Left colon (tissue), 2 donors: ENCODE measurements at regions of chr9 and their contacts with region 1.

Region 1: GRCh38 chr9:73081979-73082657 is 69.5 kb upstream of the ANXA1 start:
- DNase-seq: no peak
- ATAC-seq: peak; percentile 40

Region 2: DNA sequence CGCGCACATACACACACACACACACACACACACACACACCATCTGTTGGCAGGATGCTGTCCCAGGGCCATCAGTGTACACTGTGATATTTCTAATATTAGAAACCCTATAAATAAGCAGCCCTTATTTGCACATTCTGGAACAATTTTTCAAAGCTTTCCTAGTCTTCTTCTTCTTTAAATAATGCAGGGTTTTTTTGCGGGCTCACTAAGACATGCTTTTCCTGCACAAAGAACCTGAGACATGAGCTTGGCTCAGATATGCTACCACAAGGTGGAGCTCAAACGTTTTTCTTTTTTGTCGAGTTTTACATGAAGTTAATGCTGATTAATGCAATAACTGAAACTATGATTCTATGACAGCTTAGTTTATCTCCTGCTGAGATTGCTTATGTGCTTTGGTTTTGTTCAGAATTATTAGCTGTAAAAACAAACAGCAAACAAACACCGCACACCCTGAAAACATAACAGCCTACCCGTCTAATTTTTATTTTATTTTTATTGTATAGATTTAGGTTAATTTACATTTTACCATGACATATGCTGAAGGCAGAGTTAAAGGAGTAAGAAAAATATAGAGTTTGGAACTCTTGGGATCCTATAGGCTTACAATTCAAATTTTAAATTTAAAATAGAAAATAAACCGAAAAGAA is 225.0 kb before region 1 on chr9:
- intact Hi-C with region 1: loop called in 1 of 2 experiments (anchors 5 kb)
- DNase-seq: peak in 1 of 2 donors; percentile 8
- ATAC-seq: peak; percentile 69

Region 3: GRCh38 chr9:73038613-73039012 is 43.5 kb before region 1 on chr9:
- intact Hi-C with region 1: loop called in 1 of 2 experiments (anchors 10 kb)
- DNase-seq: peak in 1 of 2 donors; percentile 38
- ATAC-seq: no peak